PC-3 (cell line): ENCODE measurements at regions of chr7 and their contacts with region 1.

Region 1: DNA sequence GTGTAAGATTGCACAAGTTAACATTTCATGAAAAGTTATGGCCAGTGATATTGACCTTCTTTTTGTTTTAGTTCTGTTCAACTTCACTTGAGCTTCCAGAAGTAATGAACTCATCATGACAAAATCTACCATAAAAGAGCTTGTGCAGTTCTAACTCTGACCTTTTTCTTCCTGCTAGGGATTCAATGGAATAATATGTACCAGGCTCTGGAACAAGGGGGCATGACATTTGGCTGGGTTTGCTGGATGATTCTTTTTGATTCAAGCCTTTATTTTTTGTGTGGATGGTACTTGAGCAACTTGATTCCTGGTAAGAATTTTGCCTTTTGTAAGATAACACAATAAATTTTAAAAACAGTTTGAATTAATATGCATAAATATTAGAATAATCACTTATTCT is 205.0 kb downstream of the ABCA13 start:
- DNase-seq: no peak
- ATAC-seq: no peak
- H3K4me3 ChIP-seq: no peak overlapping the region
- H3K27ac ChIP-seq: no peak overlapping the region
- H3K4me1 ChIP-seq: peaks cover 4% of the 10 kb centered on the region; the same call in 1 of the 2 replicates
- H3K27me3 ChIP-seq: no peaks in the 10 kb centered on the region
- CTCF ChIP-seq: no peak

Region 2: DNA sequence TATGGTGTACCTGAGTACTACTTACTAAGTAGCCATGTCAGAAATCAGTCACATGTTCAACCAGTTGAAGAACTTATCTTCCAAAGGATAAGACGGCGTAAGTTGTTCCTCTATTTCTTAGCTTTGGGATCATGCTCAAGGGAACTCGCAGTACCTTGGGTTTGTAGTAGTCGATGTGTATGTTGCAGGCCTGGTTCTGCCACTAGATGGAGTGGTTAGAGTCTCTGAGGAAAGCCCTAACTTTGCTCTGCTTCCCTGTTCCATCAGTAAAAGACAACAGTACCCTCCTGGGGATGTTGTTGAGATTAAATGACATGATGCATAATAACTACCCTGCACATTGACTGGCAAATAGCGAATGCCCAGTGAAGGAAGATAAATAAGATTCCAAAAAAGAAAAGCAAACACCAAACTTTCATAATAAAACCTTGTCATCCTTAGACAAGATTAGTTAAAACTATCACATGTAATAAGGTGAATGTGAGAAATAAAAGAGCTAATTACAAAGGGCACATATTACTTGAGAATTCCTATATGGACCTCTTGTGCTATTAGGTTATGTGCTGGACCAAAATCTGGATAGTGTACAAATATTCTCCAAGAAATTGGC is 39.1 kb before region 1 on chr7:
- CTCF ChIA-PET with region 1: no interaction called
- POLR2A ChIA-PET with region 1: no interaction called
- intact Hi-C with region 1: loop called (anchors 5 kb)
- DNase-seq: peak; percentile 68
- ATAC-seq: peak; percentile 99
- H3K4me3 ChIP-seq: no peak overlapping the region
- H3K27ac ChIP-seq: no peak overlapping the region
- H3K4me1 ChIP-seq: no peaks in the 10 kb centered on the region
- H3K27me3 ChIP-seq: no peaks in the 10 kb centered on the region
- CTCF ChIP-seq: peak; percentile 90

Region 3: DNA sequence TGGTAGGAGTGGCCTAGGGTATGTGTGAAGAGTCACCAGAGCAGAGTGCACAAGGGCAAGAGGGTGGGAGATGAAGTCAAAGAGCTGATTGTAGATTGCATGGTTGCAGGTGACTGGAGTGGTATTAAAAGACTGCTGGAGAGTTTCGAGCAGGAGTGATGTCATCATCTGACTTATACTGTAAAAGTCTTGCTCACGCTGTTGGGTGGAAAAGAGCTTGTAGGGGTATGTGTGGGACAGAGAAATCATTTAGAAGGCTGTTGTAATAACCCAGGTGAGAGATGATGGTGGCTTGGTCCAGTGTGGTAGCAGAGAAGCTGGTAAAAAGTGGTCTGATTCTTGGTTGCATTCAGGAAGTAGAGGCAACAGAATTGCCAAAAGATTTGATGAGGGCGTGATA is 20.9 kb before region 1 on chr7:
- CTCF ChIA-PET with region 1: no interaction called
- POLR2A ChIA-PET with region 1: no interaction called
- intact Hi-C with region 1: no loop called
- DNase-seq: no peak
- ATAC-seq: no peak
- H3K4me3 ChIP-seq: no peak overlapping the region
- H3K27ac ChIP-seq: no peak overlapping the region
- H3K4me1 ChIP-seq: peaks cover 8% of the 10 kb centered on the region; the same call in 1 of the 2 replicates
- H3K27me3 ChIP-seq: no peaks in the 10 kb centered on the region
- CTCF ChIP-seq: no peak